Endothelial cell of umbilical vein (primary cell): ENCODE measurements at regions of chr16 and their contacts with region 1.

Region 1: GRCh38 chr16:88194397-88195268 is 188.1 kb upstream of the ZNF469 start:
- DNase-seq: no peak
- H3K4me3 ChIP-seq: no peak overlapping the region
- H3K27ac ChIP-seq: no peak overlapping the region
- H3K4me1 ChIP-seq: no peaks in the 10 kb centered on the region
- H3K27me3 ChIP-seq: no peaks in the 10 kb centered on the region
- CTCF ChIP-seq: no peak
- POLR2A ChIP-seq: no peak

Region 2: DNA sequence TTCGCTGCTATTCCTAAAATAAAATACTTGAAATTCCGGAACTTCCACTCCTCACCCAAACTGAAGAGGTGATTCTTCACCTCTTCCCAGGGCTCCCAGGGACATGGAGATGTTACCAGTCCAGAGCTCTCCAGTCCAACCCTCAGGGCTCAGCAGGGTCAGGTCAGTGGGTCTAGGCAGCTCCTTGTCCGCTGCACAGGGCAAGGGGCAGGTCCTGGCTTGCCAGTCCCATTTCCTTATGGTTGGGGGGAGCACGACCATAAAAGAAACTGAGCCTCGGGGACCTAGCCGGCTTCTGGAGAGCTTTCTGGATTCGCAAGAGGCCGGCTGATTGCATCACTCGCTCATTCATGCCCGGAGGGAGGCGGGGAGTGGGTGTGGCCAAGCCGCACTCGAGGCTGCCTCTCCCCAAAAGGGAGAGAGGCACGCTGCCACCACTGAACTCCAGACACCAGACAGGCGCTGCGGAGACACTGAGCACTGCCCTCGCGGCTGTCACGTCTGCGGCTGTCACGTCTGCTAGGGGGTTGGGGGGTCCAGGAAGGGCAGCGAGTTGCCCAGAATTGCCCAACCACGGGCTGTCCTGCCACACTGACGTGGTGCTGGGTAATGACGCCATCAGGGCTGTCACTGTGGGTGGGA is 341.1 kb before region 1 on chr16:
- CTCF ChIA-PET with region 1: no interaction called
- POLR2A ChIA-PET with region 1: no interaction called
- dilution Hi-C with region 1: no loop called
- intact Hi-C with region 1: no loop called
- DNase-seq: peak; percentile 83
- H3K4me3 ChIP-seq: peak overlapping the region in 2 of 3 experiments; percentile 24 to 49
- H3K27ac ChIP-seq: peak overlapping the region; percentile 61
- H3K4me1 ChIP-seq: peaks cover 4% of the 10 kb centered on the region
- H3K27me3 ChIP-seq: no peaks in the 10 kb centered on the region
- CTCF ChIP-seq: no peak
- POLR2A ChIP-seq: no peak

Region 3: GRCh38 chr16:88383401-88384221 is 189.0 kb after region 1 on chr16:
- CTCF ChIA-PET with region 1: interaction called, 4 read pairs
- POLR2A ChIA-PET with region 1: no interaction called
- dilution Hi-C with region 1: no loop called
- intact Hi-C with region 1: loop called (anchors 5 kb)
- DNase-seq: peak; percentile 22
- H3K4me3 ChIP-seq: peak overlapping the region in 2 of 3 experiments; percentile 8
- H3K27ac ChIP-seq: no peak overlapping the region
- H3K4me1 ChIP-seq: no peaks in the 10 kb centered on the region
- H3K27me3 ChIP-seq: peaks cover 7 to 9% of the 10 kb centered on the region in 2 experiments
- CTCF ChIP-seq: peak in 1 of 2 donors; percentile 53
- POLR2A ChIP-seq: no peak